Heart right ventricle (tissue), 16 donors: ENCODE measurements at regions of chr20 and their contacts with region 1.

Region 1: DNA sequence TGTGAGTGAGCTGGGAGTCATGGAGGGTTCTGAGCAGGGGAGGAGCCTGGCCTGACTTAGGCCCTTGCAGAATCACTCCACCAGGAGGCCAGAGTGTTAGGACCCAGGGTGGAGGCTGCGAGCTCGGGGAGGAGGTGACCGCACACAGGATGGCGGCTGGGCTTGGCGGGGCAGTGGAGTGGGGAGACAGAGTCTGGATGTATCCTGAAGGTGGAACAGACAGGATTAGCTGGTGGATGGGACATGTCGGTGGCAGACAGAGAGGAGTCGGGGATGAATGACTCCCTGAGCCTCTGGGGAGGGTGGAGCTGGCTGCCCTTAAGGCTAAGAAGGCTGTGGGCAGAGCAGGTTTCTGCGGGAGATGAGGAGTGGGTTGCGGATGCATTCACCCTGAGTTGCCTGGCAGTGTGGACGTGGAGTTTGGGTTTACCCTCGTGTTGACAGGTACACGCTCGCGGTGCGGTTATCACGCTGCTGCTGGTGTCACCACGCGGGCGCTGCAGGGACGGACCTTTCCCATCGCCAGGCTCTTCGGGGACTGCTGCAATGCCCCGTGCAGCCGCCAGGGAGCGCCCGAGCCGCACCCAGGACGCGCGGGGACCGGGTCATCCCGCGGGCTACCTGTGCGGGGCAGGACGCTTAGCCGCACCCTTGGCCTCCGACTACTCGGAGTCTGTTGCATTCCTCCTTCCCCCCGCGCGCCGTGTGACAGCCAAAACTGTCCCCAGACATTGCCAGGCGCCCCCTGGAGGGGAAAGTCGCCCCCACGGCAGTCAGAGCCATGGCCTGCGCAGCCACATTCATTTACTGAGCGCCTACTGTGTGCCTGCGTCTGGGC is 43.0 kb upstream of the PTGIS start:
- DNase-seq: peak; percentile 63 to 81
- ATAC-seq: peak; percentile 61 to 85 (median 74)
- H3K4me3 ChIP-seq: peak overlapping the region in 4 of 10 donors; percentile 16 to 33 (median 26)
- H3K27ac ChIP-seq: peak overlapping the region in 4 of 10 donors; percentile 30 to 77 (median 52)
- H3K4me1 ChIP-seq: peaks cover 4 to 30% (median 22%) of the 10 kb centered on the region in 9 donors
- H3K27me3 ChIP-seq: peaks cover 0 to 16% (median 3%) of the 10 kb centered on the region in 7 donors
- CTCF ChIP-seq: peak; percentile 99 to 100 (median 100)

Region 2: DNA sequence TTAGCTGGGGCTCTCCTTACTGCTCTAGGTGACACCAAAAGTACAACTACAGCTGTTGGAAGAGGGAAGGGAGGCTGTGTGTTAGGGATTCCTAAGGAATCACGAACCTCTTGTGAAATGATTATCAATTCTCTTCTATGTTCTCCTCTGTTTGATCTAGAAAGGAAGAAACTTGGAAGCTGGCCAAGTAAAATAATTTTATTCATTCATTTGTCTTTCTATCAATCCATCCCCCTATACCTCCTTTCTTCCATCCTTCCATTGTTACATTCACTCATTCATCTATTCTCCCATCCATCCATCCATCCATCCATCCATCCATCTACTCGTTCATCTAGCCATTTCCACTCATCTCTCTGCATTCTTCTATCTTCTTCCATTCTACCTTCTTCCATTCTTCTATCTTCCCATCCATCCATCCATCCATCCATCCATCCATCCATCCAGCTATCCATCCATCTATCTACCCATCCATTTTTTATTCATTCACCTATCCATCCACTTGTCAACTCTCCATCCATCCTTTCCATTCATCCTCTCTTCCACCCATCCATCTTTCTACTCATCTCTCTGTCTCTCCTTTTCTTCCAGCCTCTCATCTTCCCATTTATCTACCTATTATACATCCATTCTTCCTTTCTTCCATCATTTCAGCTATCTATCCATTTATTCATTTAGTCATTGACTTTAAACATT is 280.2 kb before region 1 on chr20:
- intact Hi-C with region 1: loop called in 8 of 10 experiments (anchors 2 to 10 kb)
- DNase-seq: no peak
- ATAC-seq: no peak
- H3K4me3 ChIP-seq: no peak overlapping the region
- H3K27ac ChIP-seq: no peak overlapping the region
- H3K4me1 ChIP-seq: no peaks in the 10 kb centered on the region
- H3K27me3 ChIP-seq: peaks cover 0 to 60% (median 38%) of the 10 kb centered on the region in 7 donors
- CTCF ChIP-seq: no peak

Region 3: GRCh38 chr20:49541733-49542513 is 69.0 kb before region 1 on chr20:
- intact Hi-C with region 1: loop called (anchors 1 to 5 kb)
- DNase-seq: peak; percentile 61 to 68
- ATAC-seq: peak in 7 of 8 donors; percentile 60 to 82 (median 75)
- H3K4me3 ChIP-seq: no peak overlapping the region
- H3K27ac ChIP-seq: peak overlapping the region in 4 of 10 donors; percentile 12 to 35 (median 32)
- H3K4me1 ChIP-seq: peaks cover 0 to 4% (median 0%) of the 10 kb centered on the region in 9 donors
- H3K27me3 ChIP-seq: no peaks in the 10 kb centered on the region
- CTCF ChIP-seq: peak; percentile 60 to 87 (median 80)

Region 4: GRCh38 chr20:49724408-49725223 is 113.7 kb after region 1 on chr20:
- intact Hi-C with region 1: loop called in 3 of 10 experiments (anchors 5 to 10 kb)
- DNase-seq: peak; percentile 35 to 83
- ATAC-seq: peak; percentile 90 to 99 (median 98)
- H3K4me3 ChIP-seq: no peak overlapping the region
- H3K27ac ChIP-seq: peak overlapping the region in 9 of 10 donors; percentile 9 to 74 (median 69)
- H3K4me1 ChIP-seq: peaks cover 0 to 38% (median 12%) of the 10 kb centered on the region in 9 donors
- H3K27me3 ChIP-seq: no peaks in the 10 kb centered on the region
- CTCF ChIP-seq: no peak

Region 5: DNA sequence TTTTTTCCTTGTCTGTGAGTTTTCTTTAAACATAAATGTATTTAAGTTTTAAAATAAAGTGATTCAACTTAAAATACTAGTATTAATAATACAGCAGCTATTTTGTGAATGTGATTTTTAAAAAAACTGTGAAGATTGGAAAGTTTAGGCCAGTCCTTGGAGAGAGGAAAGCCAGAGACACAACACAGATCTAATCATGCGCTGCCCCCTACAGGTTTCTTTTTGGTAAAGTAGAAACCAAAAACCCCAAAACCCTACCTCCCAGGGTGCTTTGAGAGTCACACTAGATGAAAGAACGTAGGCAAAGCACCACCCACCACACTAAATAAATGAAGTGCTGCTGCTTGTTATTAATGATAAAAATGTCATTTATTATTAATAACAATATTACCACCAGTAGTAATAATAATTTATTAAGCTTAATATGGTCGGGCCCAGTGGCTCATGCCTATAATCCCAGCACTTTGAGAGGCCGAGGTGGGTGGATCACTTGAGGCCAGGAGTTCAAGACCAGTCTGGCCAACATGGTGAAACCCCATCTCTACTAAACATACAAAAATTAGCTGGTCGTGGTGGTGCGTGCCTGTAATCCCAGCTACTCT is 235.4 kb after region 1 on chr20:
- intact Hi-C with region 1: loop called in 9 of 10 experiments (anchors 1 to 5 kb)
- DNase-seq: peak in 1 of 2 donors; percentile 51
- ATAC-seq: peak in 6 of 8 donors; percentile 63 to 73 (median 67)
- H3K4me3 ChIP-seq: no peak overlapping the region
- H3K27ac ChIP-seq: no peak overlapping the region
- H3K4me1 ChIP-seq: peaks cover 1 to 27% (median 19%) of the 10 kb centered on the region in 9 donors
- H3K27me3 ChIP-seq: no peaks in the 10 kb centered on the region
- CTCF ChIP-seq: peak; percentile 32 to 75 (median 65)

Region 6: GRCh38 chr20:49888345-49888966 is 277.5 kb after region 1 on chr20:
- intact Hi-C with region 1: loop called in 4 of 10 experiments (anchors 1 to 5 kb)
- DNase-seq: peak in 1 of 2 donors; percentile 38
- ATAC-seq: peak in 5 of 8 donors; percentile 7 to 32 (median 17)
- H3K4me3 ChIP-seq: no peak overlapping the region
- H3K27ac ChIP-seq: peak overlapping the region in 9 of 10 donors; percentile 3 to 79 (median 71)
- H3K4me1 ChIP-seq: peaks cover 26 to 69% (median 64%) of the 10 kb centered on the region in 9 donors
- H3K27me3 ChIP-seq: no peaks in the 10 kb centered on the region
- CTCF ChIP-seq: peak; percentile 48 to 81 (median 76)

Region 7: DNA sequence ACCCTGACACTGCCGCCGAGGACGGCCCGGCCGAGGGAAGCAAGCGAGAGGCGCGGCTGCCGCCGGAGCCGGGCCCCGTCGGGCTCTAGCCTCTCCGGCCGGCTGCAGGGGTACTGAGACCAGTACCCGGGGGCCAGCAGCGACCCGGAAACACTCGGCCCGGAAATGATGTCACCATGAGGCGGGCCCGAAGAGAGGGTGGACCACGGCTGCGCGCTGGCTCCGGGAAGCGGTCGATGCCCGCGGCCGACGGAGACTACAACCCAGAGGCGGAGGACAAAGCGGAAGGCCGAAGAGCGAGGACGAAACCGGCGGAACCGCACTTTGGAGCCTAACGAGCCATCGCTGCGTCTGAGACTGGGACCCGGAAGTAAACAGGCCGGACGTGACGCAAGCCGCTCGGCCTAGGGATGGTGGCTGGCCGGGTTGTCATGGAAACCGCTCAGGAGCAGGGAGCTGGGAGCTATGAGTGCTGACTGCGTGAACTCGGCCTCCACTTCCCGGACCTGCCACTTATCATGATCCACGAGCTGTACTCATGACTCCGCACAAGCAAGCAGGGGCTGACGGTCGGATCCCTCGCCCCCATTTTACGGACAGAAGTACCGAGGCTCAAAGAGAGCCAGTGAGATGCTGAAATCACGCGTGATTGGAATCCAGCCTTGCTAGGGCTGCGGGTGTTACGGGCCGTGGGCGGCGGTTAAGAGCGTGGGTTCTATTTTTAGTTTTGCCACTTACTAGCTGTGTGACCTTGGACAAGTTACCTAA is 304.6 kb after region 1 on chr20 and contains the start of gene SPATA2:
- intact Hi-C with region 1: loop called in 1 of 10 experiments (anchors 10 kb)
- DNase-seq: peak; percentile 95 to 97
- ATAC-seq: peak; percentile 92 to 98 (median 96)
- H3K4me3 ChIP-seq: peak within 1 kb of the TSS; percentile 81 to 100 (median 98)
- H3K27ac ChIP-seq: peak within 1 kb of the TSS; percentile 96 to 99 (median 99)
- H3K4me1 ChIP-seq: peaks cover 4 to 53% (median 48%) of the 10 kb centered on the region in 9 donors
- H3K27me3 ChIP-seq: no peaks in the 10 kb centered on the region
- CTCF ChIP-seq: no peak
- total RNA-seq, gene SPATA2: 5.2 to 11.8 (median 6.7) TPM